ENCODE measurements at regions of chr19 and their contacts with region 1.

Region 1: DNA sequence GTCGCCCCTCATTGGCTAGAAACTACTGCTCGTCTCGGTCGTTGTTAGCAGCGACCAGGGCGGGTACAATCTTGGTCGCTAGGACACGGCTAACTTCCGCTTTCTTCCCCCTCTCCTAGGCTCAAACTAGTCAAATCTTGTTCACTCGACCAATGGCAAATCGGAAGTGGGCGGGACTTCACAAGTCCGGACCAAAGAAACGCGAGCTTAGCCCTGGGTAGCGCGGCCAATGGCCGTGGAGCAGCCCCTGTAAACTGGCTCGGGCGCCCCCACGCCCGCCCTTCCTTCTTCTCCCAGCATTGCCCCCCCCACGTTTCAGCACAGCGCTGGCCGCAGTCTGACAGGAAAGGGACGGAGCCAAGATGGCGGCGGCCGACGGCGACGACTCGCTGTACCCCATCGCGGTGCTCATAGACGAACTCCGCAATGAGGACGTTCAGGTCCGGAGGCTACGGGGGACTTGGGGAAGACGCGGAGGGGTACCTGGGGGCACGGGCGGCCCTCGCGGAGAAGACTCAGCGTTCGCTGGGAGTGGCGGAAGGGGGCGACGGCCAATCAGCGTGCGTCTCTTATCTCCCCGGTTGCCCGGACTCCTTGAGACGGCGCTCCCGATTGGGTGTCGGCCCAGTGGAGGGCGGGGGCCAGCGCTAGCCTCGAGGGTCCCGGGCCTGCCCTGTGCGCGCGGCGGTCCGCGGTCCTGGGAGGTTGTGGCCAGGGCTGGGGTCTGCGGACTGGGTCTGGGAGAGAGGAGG is at the start of gene PPP2R1A:
- DNase-seq: peak; percentile 98 to 100
- H3K4me3 ChIP-seq: peak within 1 kb of the TSS; percentile 85 to 92 (median 88)
- H3K27ac ChIP-seq: peak within 1 kb of the TSS; percentile 98 to 99
- H3K4me1 ChIP-seq: peaks cover 4 to 19% of the 10 kb centered on the region in 2 donors
- H3K27me3 ChIP-seq: no peaks in the 10 kb centered on the region
- CTCF ChIP-seq: peak in 2 of 3 donors; percentile 9 to 26
- POLR2A ChIP-seq: peak; percentile 69
- total RNA-seq, gene PPP2R1A: 145 to 198 (median 175) TPM

Region 2: DNA sequence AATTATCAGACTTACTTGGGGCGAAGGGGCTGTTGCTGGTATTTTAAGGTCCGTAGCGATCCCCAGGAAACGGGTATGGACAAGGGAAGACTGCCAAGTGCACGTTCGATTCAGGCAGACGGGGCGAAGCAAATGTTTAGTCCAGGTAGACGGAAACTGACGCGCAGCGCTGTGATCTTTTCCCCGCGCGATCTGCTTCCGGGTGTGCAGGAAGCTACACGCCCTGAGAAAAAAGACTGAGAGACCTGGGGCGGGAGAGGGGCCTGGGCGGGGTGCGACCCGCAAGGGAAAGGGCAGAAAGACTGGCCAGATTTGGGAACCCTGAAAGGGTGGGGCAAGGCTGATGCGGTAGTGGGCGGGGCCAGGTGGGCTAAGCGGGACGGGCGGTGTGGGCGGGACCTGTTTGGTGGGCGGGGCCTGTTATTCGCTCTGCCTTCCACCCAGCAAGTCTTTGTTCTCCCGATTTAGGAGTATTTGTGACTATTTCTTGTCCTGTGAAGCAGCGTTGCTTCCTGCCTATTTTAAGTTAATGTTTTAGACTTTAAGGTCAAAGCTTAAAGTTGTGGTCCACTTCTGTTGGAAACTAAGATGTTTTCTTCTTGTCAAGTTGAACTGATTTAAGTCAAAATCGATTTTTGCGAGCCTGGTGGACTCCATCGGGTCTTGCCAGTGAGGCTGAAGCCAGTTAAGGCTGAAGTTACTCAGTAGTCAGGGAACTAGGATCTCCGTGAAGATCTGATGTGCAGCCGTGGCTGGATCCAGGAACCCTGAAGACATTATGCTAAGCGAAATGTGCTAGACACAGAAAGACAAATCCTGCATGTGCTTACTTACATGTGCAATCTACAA is 18.4 kb before region 1 on chr19 and contains the start of gene ZNF836:
- intact Hi-C with region 1: loop called (anchors 2 kb)
- DNase-seq: peak; percentile 86 to 88
- H3K4me3 ChIP-seq: peak within 1 kb of the TSS; percentile 73 to 90 (median 86)
- H3K27ac ChIP-seq: peak within 1 kb of the TSS; percentile 86 to 94
- H3K4me1 ChIP-seq: peaks cover 0 to 6% of the 10 kb centered on the region in 2 donors
- H3K27me3 ChIP-seq: no peaks in the 10 kb centered on the region
- CTCF ChIP-seq: no peak
- POLR2A ChIP-seq: no peak
- total RNA-seq, gene ZNF836: 10.2 to 21.8 (median 16.4) TPM

Region 3: DNA sequence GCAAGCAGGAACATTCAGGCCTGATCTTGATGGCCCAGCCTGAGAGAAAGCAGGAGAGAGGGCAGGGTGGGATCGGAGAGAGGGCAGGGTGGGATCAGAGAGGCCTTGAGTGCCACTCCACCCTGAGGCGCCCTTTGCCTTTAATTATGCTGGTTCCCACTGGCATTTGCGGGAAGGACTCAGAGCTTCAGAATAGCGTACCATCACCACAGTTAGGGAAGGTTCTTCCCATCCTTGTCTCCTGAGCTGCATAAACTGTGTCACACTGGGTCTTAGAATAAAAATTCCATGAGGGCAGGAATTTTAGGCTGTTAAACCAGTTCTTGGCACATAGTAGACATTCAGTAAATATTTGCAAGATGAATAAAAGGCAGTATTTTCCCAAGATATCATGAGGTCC is 24.3 kb after region 1 on chr19:
- intact Hi-C with region 1: no loop called
- DNase-seq: no peak
- H3K4me3 ChIP-seq: no peak overlapping the region
- H3K27ac ChIP-seq: no peak overlapping the region
- H3K4me1 ChIP-seq: no peaks in the 10 kb centered on the region
- H3K27me3 ChIP-seq: no peaks in the 10 kb centered on the region
- CTCF ChIP-seq: no peak
- POLR2A ChIP-seq: no peak

Measured in breast epithelium (tissue), 4 donors.